Esophagus squamous epithelium (tissue), 5 donors: ENCODE measurements at regions of chr5 and their contacts with region 1.

Region 1: DNA sequence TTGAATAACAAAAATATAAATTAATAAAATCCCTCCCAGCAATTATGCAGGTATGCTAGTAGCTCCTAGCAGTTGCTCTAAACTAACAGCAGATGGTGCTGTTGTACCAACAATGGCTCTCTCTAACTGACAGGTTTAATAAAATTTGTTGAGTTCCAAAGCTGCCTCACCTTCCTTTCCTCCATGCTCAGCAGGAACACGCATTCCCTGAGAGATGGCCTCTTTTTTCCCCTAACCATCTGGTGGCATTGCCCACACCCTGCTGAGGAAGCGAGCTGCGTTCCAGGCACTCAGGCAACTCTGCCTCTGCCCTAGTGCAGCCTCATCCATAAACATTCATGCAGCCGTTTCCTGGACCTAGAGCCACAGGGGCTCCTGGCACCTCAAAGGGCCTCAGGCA is 106.2 kb downstream of the KLHL3 start:
- DNase-seq: no peak
- H3K4me3 ChIP-seq: no peak overlapping the region
- H3K27ac ChIP-seq: peak overlapping the region in 2 of 4 donors; percentile 35 to 38
- H3K4me1 ChIP-seq: peaks cover 0 to 27% (median 15%) of the 10 kb centered on the region in 3 donors
- H3K27me3 ChIP-seq: no peaks in the 10 kb centered on the region
- CTCF ChIP-seq: peak; percentile 63 to 93 (median 90)
- POLR2A ChIP-seq: no peak

Region 2: GRCh38 chr5:137730336-137730735 is 100.7 kb after region 1 on chr5:
- intact Hi-C with region 1: no loop called
- DNase-seq: no peak
- H3K4me3 ChIP-seq: no peak overlapping the region
- H3K27ac ChIP-seq: no peak overlapping the region
- H3K4me1 ChIP-seq: peaks cover 0 to 17% (median 7%) of the 10 kb centered on the region in 3 donors
- H3K27me3 ChIP-seq: no peaks in the 10 kb centered on the region
- CTCF ChIP-seq: no peak
- POLR2A ChIP-seq: no peak

Region 3: GRCh38 chr5:137743031-137743640 is 113.5 kb after region 1 on chr5:
- intact Hi-C with region 1: loop called (anchors 10 kb)
- DNase-seq: no peak
- H3K4me3 ChIP-seq: no peak overlapping the region
- H3K27ac ChIP-seq: no peak overlapping the region
- H3K4me1 ChIP-seq: peaks cover 0 to under 1% (median 0%) of the 10 kb centered on the region in 3 donors
- H3K27me3 ChIP-seq: no peaks in the 10 kb centered on the region
- CTCF ChIP-seq: peak in 4 of 6 experiments; percentile 46 to 68 (median 59)
- POLR2A ChIP-seq: no peak

Region 4: GRCh38 chr5:138138949-138139780 is 509.5 kb after region 1 on chr5 and contains the start of gene NME5:
- intact Hi-C with region 1: loop called (anchors 10 kb)
- DNase-seq: no peak
- H3K4me3 ChIP-seq: peak within 1 kb of the TSS; percentile 19 to 62 (median 46)
- H3K27ac ChIP-seq: no peak within 1 kb of the TSS
- H3K4me1 ChIP-seq: peaks cover 0 to 24% (median 3%) of the 10 kb centered on the region in 3 donors
- H3K27me3 ChIP-seq: no peaks in the 10 kb centered on the region
- CTCF ChIP-seq: no peak
- POLR2A ChIP-seq: no peak
- total RNA-seq, gene NME5: 0.38 to 3.0 (median 0.61) TPM in 3 of 4 donors, not detected in the other